ENCODE measurements at regions of chr2 and their contacts with region 1.

Region 1: GRCh38 chr2:70871398-70872211 is 36.0 kb upstream of the CD207 start:
- DNase-seq: peak; percentile 70
- ATAC-seq: peak; percentile 100
- H3K4me3 ChIP-seq: peak overlapping the region; percentile 33 to 46
- H3K27ac ChIP-seq: no peak overlapping the region
- H3K4me1 ChIP-seq: peaks cover 3 to 12% of the 10 kb centered on the region in 2 experiments; a peak in 1 of 4 replicates
- H3K27me3 ChIP-seq: peaks cover 3% of the 10 kb centered on the region; the same call in 1 of the 2 replicates
- CTCF ChIP-seq: peak; percentile 81 to 98 (median 88)
- POLR2A ChIP-seq: no peak
- RAD21 ChIP-seq: peak; percentile 96

Region 2: DNA sequence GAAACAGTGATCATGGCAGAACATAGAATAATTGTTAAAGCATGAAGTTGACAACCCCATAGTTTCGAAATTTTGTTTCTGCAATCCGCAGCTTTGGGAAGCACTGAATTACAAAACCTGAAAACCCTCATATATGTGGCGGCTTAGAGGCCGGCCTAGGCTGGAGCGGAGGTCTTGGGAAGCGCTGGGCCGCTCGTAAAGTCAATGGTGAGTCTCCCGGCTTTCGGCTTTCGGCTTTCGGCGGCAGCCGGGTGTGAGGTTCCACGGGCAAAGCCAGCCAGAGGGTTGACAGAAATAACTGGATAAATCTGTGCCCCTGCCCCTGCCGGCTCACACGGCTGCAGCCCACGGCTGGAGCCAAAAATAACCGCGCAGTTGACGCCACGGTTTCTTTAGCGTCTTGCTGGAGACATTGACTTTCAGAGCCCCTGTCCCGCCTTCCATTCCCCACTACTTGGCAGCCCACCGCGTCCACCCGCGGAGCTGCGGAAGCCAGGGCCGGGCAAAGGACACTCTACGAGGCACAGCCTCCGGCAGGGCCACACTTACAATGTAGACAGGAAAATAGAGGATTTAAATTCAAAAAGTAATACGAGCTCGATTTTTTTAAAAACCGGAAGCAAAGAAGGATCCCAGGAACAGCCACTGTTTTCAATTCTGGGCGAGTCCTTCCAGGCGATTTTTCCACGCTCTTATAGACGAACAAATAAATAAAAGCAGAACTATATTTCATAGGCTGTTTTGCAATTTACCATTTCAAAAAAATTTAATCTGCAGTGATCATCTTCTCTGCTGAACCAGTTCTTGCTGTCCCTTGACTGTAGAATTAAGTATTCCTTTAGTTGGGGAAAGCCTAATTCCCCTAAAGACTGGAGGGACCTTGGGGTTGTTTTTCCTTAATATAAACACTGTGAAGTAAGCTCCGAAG is 35.8 kb after region 1 on chr2:
- CTCF ChIA-PET with region 1: interaction called, 3 read pairs
- POLR2A ChIA-PET with region 1: no interaction called
- RAD21 ChIA-PET with region 1: no interaction called
- intact Hi-C with region 1: loop called (anchors 2 kb)
- DNase-seq: no peak
- ATAC-seq: no peak
- H3K4me3 ChIP-seq: no peak overlapping the region
- H3K27ac ChIP-seq: no peak overlapping the region
- H3K4me1 ChIP-seq: no peaks in the 10 kb centered on the region
- H3K27me3 ChIP-seq: no peaks in the 10 kb centered on the region
- CTCF ChIP-seq: no peak
- POLR2A ChIP-seq: no peak
- RAD21 ChIP-seq: no peak

Region 3: DNA sequence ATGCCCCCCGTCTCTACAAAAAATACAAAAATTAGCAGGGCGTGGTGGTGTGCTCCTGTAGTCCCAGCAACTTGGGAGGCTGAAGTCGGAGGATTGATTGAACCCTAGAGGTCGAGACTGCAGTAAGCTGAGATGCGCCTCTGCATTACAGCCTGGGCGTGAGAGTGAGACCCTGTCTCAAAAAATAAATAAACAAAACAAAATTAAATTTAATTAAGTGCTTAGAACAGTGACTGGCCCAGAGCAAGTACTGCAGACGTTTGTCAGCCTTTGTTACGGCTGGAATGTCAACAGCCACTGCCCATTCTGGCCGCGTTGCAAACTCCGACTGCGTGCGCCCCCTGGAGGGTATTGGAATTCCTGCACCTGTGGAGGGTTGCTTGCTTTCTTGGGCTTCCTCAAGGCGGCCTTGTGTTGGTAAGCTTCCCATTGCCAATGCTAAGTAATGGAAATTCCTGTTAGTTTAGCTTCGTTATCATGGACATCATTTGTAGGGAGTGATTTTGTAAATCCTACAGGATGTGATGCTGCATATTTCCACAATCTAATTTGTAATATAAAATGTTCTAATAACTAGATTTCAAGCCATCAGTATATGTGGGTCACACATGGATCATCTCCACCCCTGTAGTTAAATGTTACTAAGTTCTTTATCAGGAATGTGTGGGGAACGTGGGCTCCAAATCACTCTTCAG is 48.2 kb after region 1 on chr2:
- CTCF ChIA-PET with region 1: interaction called, 8 read pairs
- POLR2A ChIA-PET with region 1: no interaction called
- RAD21 ChIA-PET with region 1: interaction called in 1 of 2 experiments, 3 read pairs
- intact Hi-C with region 1: loop called (anchors 1 kb)
- DNase-seq: peak; percentile 54
- ATAC-seq: peak; percentile 85
- H3K4me3 ChIP-seq: no peak overlapping the region
- H3K27ac ChIP-seq: no peak overlapping the region
- H3K4me1 ChIP-seq: no peaks in the 10 kb centered on the region
- H3K27me3 ChIP-seq: no peaks in the 10 kb centered on the region
- CTCF ChIP-seq: peak; percentile 91 to 94 (median 93)
- POLR2A ChIP-seq: no peak
- RAD21 ChIP-seq: peak; percentile 83

Region 4: DNA sequence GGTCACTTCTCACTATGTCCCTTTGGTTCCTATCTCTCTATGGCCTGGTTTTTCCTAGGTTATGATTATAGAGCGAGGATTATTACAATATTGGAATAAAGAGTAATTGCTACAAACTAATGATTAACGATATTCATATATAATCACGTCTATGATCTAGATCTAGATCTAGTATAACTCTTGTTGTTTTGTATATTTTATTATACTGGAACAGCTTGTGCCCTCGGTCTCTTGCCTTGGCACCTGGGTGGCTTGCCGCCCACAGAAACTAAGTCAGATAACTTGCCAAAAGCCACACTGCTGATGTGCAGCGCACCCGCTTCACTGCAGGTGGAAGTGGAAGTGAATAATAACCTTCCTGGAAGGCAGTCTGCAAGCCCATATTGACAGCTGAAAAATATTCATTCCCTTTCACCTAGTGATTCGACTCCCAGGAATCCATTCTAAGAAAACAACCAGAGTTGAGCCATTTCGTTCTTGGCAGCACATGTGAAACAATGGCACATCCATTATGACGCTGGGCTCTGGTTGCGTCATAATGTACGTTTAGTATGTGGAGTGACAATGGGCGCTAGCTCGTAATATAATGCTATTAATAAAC is 106.1 kb after region 1 on chr2:
- CTCF ChIA-PET with region 1: interaction called, 4 read pairs
- POLR2A ChIA-PET with region 1: no interaction called
- RAD21 ChIA-PET with region 1: interaction called in 1 of 2 experiments, 4 read pairs
- intact Hi-C with region 1: loop called (anchors 2 kb)
- DNase-seq: no peak
- ATAC-seq: no peak
- H3K4me3 ChIP-seq: peak overlapping the region in 1 of 2 experiments; percentile 64; a peak in 3 of 4 replicates
- H3K27ac ChIP-seq: no peak overlapping the region
- H3K4me1 ChIP-seq: peaks cover 7 to 21% of the 10 kb centered on the region in 2 experiments; a peak in 3 of 4 replicates
- H3K27me3 ChIP-seq: no peaks in the 10 kb centered on the region
- CTCF ChIP-seq: 0 out of 6 replicates have a peak, but pooled peaks of 1 of the 3 experiments have one; percentile 21
- POLR2A ChIP-seq: no peak
- RAD21 ChIP-seq: no peak